ENCODE measurements at regions of chr12 and their contacts with region 1.

Region 1: DNA sequence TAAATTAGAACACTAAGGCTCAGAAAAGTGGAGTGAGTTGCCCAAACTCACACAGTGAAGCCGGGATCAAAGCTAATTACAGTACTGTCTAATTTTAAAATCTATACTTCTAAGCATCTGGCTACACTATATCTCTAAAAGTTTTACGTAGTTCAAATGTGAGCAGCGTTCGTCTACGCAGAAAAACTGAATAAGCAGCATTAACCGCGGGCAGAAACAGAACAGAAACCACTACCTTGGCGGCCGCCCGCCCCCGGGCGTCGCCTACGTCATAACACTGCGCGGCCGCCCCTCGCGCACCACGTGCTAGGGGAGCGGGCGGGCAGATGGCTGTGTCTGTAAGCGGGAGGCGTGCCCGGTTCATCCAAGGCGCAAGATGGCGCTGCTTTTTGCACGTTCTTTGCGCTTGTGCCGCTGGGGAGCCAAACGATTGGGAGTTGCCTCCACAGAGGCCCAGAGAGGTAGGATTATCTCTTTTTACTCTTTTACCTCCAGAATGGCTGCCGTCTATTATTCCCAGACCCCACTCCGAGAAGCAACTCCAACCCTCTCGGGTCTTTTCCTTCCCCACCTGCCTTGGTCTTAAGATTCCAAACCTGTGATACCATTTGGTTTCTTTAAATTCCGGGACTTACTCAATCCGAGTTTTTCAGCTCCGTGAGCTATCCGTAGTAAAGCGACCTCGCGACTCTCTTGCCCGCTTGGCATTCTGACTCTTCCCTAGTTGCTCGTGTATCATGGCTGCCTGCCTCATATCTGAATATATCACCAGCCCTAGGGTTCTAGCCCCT is at the start of gene SPRYD4:
- DNase-seq: peak; percentile 94 to 98 (median 97)
- ATAC-seq: peak; percentile 97 to 98
- H3K4me3 ChIP-seq: peak within 1 kb of the TSS; percentile 87
- H3K27ac ChIP-seq: peak within 1 kb of the TSS; percentile 55
- H3K4me1 ChIP-seq: peaks cover 6% of the 10 kb centered on the region
- H3K27me3 ChIP-seq: no peaks in the 10 kb centered on the region
- total RNA-seq, gene SPRYD4: 2.6 to 3.3 (median 2.7) TPM

Region 2: DNA sequence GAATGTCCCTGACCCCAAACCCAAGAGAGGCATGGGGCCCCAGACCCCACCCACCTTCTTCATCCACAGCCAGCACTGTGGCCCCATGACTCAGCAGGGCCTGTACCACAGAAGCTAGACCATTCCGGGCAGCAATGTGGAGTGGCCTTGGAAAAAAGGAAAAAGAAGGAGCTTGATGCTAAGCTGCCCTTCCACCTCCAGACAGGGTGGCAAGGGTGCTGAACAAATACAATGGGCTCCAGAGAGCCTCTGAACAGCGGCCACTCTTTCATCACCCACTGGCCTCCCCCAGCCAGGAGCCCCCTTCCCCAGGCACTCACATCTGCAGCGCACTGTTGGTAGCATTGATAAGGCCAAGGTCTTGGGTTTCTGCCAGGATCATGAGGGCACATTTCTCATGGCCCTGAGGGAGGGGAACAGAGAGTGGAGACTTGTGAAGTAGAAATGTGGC is 224.7 kb before region 1 on chr12:
- intact Hi-C with region 1: no loop called
- DNase-seq: no peak
- ATAC-seq: peak in 1 of 2 donors; percentile 6
- H3K4me3 ChIP-seq: no peak overlapping the region
- H3K27ac ChIP-seq: no peak overlapping the region
- H3K4me1 ChIP-seq: no peaks in the 10 kb centered on the region
- H3K27me3 ChIP-seq: no peaks in the 10 kb centered on the region

Region 3: DNA sequence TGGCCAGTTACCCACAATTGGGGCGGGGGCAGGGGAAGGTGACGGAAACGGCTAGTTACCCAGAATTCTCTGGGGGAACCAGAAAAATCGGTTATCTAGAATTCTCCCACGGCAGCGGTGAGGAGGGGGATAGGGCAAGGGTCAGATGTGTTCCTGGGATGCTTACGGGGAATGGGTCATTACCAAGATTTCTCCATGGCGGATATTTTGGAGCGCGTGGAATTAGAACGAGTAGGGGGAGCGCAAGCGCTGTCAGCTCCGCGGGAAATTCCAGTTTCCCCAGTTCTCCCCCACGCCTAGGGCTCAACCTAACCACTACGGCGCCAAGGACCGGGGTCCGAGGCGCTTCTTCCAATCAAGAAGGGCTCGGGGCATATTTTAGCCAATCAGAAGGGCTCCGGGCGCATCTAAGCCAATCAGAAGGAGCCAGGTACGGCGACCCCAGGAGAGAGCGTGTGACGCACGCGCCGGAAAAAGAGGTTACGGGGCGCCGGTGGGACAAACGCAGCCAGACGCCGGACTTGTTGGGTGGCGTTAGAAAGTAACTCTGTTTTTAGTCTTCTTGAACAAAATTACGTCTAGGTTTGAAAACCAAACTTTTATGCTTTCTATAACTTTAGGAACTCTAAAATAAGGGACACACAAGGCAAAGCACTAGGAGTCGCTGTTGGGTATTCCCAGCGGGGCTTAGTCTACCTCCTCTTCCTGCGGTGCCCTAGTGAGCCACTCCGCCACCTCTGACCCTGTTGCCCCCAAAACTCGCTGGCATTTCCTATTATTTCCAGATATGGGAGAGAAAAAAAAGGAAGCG is 134.5 kb before region 1 on chr12 and contains the start of gene PAN2:
- intact Hi-C with region 1: loop called in 1 of 4 experiments (anchors 10 kb)
- DNase-seq: peak; percentile 97 to 98 (median 98)
- ATAC-seq: peak; percentile 99
- H3K4me3 ChIP-seq: peak within 1 kb of the TSS; percentile 77
- H3K27ac ChIP-seq: peak within 1 kb of the TSS; percentile 96
- H3K4me1 ChIP-seq: peaks cover 7% of the 10 kb centered on the region
- H3K27me3 ChIP-seq: no peaks in the 10 kb centered on the region
- total RNA-seq, gene PAN2: 39.9 to 58.3 (median 49.1) TPM

Region 4: GRCh38 chr12:56420411-56420810 is 48.0 kb before region 1 on chr12:
- intact Hi-C with region 1: no loop called
- DNase-seq: no peak
- ATAC-seq: no peak
- H3K4me3 ChIP-seq: no peak overlapping the region
- H3K27ac ChIP-seq: no peak overlapping the region
- H3K4me1 ChIP-seq: no peaks in the 10 kb centered on the region
- H3K27me3 ChIP-seq: no peaks in the 10 kb centered on the region

Region 5: DNA sequence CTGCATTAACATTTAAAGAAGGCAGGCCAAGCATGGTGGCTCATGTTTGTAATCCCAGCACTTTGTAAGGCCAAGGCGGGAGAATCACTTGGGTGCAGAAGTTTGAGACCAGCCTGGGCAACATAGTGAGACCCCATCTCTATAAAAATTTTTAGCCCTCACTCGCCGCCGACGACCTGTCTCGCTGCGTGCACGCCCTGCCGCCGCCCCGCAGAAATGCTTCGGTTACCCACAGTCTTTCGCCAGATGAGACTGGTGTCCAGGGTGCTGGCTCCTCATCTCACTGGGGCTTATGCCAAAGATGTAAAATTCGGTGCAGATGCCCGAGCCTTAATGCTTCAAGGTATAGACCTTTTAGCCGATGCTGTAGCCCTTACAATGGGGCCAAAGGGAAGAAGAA is 42.4 kb after region 1 on chr12:
- intact Hi-C with region 1: no loop called
- DNase-seq: no peak
- ATAC-seq: no peak
- H3K4me3 ChIP-seq: no peak overlapping the region
- H3K27ac ChIP-seq: no peak overlapping the region
- H3K4me1 ChIP-seq: no peaks in the 10 kb centered on the region
- H3K27me3 ChIP-seq: no peaks in the 10 kb centered on the region

Region 6: DNA sequence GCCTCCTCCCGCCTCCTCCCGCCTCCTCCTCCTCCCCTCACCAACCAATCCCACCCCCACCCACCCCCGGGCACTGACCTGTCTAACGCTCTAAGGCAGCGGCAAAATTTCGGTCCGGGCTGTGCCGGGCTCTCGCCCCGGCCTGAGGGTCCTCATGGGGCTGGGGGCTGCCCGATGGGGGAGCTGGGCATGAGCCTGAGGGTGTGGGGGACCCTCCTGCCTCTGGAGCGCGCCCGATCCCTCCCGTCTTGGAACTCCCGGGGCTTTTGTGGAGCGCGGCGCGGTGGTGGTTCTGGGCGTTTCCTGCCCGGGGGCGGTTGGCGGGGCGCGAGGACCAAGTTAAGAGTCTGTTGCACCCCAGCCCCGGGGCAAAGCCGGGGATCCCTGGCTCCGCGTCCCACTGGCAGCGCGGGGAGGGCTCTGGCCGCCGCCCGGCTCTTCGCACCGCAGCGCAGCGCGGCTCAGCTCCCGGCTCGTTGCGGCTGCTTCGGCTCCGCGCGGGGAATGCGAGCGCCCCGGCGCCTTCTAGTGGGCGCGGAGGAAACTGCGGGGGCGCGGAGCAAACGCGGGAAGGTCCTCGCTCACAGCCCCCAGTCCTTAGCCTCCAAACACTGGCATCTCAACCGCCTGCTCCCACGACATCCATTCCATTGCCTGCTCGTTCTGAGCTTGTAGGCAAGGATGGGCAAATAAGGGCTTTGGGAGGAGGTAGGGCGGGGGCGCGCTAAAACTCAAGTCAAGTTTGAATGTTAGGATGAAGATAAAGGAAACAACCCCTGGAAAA is 1164.5 kb after region 1 on chr12 and contains the start of gene B4GALNT1:
- intact Hi-C with region 1: no loop called
- DNase-seq: peak; percentile 55 to 85 (median 81)
- ATAC-seq: peak; percentile 88 to 89
- H3K4me3 ChIP-seq: peak within 1 kb of the TSS; percentile 50
- H3K27ac ChIP-seq: no peak within 1 kb of the TSS
- H3K4me1 ChIP-seq: no peaks in the 10 kb centered on the region
- H3K27me3 ChIP-seq: no peaks in the 10 kb centered on the region
- total RNA-seq, gene B4GALNT1: 1.2 to 2.5 (median 2.2) TPM

Measured in right cardiac atrium (tissue), 5 donors.